Activated CD8-positive, alpha-beta T cell treated with anti-CD3 and anti-CD28 coated beads, Interleukin-2, amount 10 ng/mL, durations not matched to agents 7 days and 5 days (primary cell): ENCODE measurements at regions of chr2 and their contacts with region 1.

Region 1: DNA sequence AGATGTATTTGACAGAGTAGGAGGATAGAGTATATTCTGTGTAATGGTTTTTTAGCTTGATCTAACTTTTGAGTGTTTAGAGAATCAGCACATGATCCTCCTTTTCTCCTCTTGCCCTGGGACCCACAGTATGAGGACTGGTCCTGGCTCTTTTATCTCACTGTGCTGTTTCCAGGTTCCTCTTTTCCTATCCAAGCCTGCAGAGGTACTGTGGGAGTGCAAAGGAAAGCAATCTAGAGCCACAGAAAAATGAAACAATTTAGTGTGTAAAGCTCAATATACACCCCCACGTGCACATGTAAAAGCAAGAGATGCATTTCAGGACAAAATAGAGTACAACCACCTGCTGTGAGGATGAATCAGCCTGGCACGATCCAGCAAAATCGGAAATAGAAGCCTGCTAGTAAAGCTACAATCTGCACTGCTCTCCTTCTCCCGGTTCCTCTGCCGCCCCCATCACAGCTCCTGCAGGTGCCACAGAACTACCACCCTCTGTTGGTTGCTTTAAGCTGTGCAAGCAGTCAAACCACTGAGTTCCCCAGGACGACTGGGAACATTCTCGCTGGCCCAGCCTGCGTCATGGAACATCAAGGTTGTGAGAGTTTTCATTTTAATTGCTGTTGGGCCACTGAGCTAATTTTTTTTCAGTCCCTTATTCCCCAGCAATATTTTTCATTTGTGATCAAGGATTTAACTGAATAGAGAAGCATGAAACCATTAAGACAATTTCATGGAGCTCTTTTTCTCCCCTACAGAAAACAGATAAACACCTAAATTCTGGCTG is 47.8 kb upstream of the MAPRE3 start:
- DNase-seq: peak; percentile 51
- ATAC-seq: peak; percentile 90
- H3K4me3 Mint-ChIP-seq: no peak overlapping the region
- H3K27ac Mint-ChIP-seq: no peak overlapping the region
- H3K4me1 Mint-ChIP-seq: peaks cover 5% of the 10 kb centered on the region
- H3K27me3 Mint-ChIP-seq: peaks cover 28% of the 10 kb centered on the region

Region 2: GRCh38 chr2:26670171-26670570 is 252.4 kb before region 1 on chr2:
- CTCF ChIA-PET with region 1: no interaction called
- POLR2A ChIA-PET with region 1: no interaction called
- DNase-seq: no peak
- ATAC-seq: no peak
- H3K4me3 Mint-ChIP-seq: no peak overlapping the region
- H3K27ac Mint-ChIP-seq: no peak overlapping the region
- H3K4me1 Mint-ChIP-seq: peaks cover 11% of the 10 kb centered on the region
- H3K27me3 Mint-ChIP-seq: peaks cover 23% of the 10 kb centered on the region

Region 3: DNA sequence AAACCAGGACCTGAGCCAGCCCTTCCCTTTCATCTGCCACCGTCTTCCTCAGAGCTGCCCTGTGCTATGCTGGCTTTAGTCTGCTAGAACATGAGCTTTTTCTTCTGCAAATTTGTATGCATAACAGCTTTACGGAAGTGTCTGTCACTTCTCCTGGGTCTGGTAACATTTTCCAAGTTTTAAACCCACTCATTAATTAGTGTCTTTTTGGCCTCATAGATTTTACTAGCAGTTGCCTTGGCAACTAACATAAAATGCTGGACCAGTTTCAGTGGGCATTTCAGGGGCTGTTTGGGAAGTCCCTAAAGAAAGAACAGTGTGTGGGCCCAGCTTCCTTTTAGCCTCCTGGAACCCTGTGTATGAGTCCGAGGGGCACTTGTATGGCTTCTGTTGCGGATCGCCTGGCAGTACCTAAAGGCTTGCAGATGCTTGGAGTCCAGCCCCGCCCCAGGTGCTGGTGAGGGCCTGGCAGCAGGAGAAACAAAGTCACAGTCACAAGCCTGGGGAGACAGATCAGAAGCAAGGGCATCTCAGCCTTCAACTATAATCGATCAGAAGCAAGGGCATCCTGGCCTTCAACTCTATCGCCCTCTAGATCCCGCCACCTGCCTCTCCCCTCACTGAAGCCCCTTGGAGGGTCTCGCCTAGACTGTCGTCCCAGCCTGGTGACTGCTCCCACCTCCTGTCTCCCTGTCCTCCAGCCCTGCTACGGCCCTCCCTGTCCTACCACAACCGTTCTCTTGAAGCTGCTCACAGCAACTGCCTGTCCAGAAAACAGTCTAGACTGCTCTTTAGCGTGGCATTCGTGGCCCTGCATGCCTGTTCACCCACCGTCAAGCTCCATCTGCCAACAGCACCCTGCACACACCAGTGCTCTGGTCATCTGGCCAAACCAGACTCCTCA is 11.1 kb after region 1 on chr2:
- CTCF ChIA-PET with region 1: interaction called, 16 read pairs
- POLR2A ChIA-PET with region 1: no interaction called
- DNase-seq: no peak
- ATAC-seq: no peak
- H3K4me3 Mint-ChIP-seq: no peak overlapping the region
- H3K27ac Mint-ChIP-seq: no peak overlapping the region
- H3K4me1 Mint-ChIP-seq: no peaks in the 10 kb centered on the region
- H3K27me3 Mint-ChIP-seq: peaks cover 3% of the 10 kb centered on the region

Region 4: DNA sequence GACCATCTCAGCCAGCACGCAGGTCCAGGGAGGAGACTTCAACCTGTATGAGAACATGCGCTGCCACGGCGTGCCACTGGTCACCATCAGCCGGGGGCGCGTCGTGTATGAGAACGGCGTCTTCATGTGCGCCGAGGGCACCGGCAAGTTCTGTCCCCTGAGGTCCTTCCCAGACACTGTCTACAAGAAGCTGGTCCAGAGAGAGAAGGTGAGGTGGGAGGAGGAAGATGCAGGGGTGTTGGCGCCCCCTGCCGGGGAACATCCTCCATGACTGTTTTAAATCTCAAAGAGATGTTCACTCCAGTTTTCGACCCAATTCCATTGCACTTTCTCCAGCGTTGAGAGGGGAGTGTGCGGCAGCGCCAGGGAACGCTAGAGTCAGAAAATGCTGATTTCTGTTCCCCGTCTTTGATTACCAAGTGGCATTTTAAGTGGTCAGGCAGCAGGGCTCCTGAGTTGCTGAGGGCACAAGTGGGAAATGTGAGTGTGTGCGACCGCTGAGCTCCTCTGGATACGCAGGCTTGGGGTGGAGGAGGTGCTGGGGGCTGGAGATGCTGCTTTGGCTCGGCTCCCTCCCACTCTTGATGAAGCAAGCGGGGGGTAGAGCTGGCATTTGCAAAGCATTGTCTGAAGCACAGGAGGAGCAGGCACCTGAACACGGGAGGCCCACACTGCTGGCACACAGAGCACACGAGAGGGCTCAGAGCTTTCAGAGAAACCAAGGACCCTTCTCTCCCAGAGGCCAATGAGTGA is 20.1 kb after region 1 on chr2:
- CTCF ChIA-PET with region 1: interaction called, 16 read pairs
- POLR2A ChIA-PET with region 1: no interaction called
- DNase-seq: peak; percentile 73
- ATAC-seq: peak; percentile 60
- H3K4me3 Mint-ChIP-seq: no peak overlapping the region
- H3K27ac Mint-ChIP-seq: no peak overlapping the region
- H3K4me1 Mint-ChIP-seq: no peaks in the 10 kb centered on the region
- H3K27me3 Mint-ChIP-seq: peaks cover 3% of the 10 kb centered on the region